Activated B cell treated with CpG ODN at 0.5 μM for 24 hours (primary cell): ENCODE measurements at regions of chrX and their contacts with region 1.

Region 1: DNA sequence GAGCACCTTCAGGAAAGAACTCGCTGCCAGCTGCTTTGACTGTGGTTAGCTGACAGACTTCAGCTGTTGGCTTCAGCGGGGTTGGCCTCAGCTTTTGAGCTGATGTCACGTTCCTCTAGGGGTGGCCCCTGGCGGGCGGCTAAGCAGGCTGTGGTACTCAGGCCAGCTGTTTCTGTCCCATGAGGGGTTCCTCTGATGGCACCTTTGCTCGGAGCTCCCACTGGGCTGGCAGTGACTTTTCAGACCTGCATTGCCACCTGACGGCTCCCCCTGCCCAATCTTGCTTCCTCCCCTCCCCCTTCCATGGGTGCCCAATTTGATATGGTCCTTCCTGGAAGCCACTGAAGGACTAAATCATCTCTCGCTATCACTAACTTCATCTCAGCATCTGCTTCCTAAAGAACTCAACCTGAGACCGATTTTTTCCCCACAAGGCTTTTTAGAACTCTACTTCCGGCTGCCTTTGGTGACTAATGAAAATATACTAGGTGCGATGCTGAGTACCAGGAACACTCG is 519.3 kb downstream of the BCOR start:
- DNase-seq: peak; percentile 32
- ATAC-seq: peak; percentile 97
- H3K4me3 Mint-ChIP-seq: no peak overlapping the region
- H3K27ac Mint-ChIP-seq: no peak overlapping the region
- H3K4me1 Mint-ChIP-seq: peaks cover 13% of the 10 kb centered on the region
- H3K27me3 Mint-ChIP-seq: peaks cover 12% of the 10 kb centered on the region
- CTCF ChIP-seq: no peak

Region 2: GRCh38 chrX:39196192-39197102 is 382.0 kb before region 1 on chrX:
- CTCF ChIA-PET with region 1: no interaction called
- POLR2A ChIA-PET with region 1: no interaction called
- intact Hi-C with region 1: loop called (anchors 5 kb)
- DNase-seq: peak; percentile 16
- ATAC-seq: peak; percentile 95
- H3K4me3 Mint-ChIP-seq: peak overlapping the region; percentile 65
- H3K27ac Mint-ChIP-seq: peak overlapping the region; percentile 56
- H3K4me1 Mint-ChIP-seq: peaks cover 19% of the 10 kb centered on the region
- H3K27me3 Mint-ChIP-seq: peaks cover 7% of the 10 kb centered on the region
- CTCF ChIP-seq: no peak

Region 3: DNA sequence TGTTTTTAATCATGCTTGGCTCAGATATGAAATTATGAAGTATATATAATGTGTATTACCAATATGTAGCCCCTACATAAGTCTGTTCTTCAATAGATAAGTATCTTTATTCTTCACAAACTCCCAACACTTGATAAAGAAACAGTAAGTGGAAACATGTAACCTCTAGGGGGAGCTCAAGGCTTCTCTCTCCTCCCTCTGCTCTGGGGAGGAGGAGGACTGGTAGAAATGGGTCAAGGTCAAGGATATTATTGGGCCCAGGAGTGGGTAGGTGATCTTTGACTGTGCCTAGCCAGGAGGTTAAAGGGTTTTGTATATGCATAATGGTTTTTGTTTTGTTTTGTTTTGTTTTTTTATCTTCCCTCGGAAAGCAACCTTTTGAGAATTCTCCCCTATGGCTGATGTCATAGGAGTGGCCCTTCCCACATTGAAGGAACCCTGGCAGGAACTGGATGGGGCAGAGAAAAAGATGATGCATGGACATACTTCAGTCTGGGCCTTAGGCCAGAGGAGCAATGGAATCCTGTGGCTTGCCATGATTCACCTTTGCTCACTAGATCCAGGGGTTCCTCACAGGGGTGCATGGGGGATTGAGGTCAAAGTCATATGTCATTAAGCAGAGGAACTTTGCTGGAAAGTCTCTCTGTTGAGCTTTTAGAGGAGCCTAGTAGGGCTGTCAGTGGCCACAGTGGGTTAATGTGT is 316.8 kb before region 1 on chrX:
- CTCF ChIA-PET with region 1: no interaction called
- POLR2A ChIA-PET with region 1: no interaction called
- intact Hi-C with region 1: loop called (anchors 5 kb)
- DNase-seq: no peak
- ATAC-seq: no peak
- H3K4me3 Mint-ChIP-seq: no peak overlapping the region
- H3K27ac Mint-ChIP-seq: no peak overlapping the region
- H3K4me1 Mint-ChIP-seq: peaks cover 4% of the 10 kb centered on the region
- H3K27me3 Mint-ChIP-seq: no peaks in the 10 kb centered on the region
- CTCF ChIP-seq: no peak

Region 4: GRCh38 chrX:39491548-39492297 is 86.7 kb before region 1 on chrX:
- CTCF ChIA-PET with region 1: no interaction called
- POLR2A ChIA-PET with region 1: no interaction called
- intact Hi-C with region 1: loop called (anchors 1 kb)
- DNase-seq: peak; percentile 36
- ATAC-seq: peak; percentile 91
- H3K4me3 Mint-ChIP-seq: peak overlapping the region; percentile 70
- H3K27ac Mint-ChIP-seq: peak overlapping the region; percentile 84
- H3K4me1 Mint-ChIP-seq: peaks cover 52% of the 10 kb centered on the region
- H3K27me3 Mint-ChIP-seq: no peaks in the 10 kb centered on the region
- CTCF ChIP-seq: no peak

Region 5: DNA sequence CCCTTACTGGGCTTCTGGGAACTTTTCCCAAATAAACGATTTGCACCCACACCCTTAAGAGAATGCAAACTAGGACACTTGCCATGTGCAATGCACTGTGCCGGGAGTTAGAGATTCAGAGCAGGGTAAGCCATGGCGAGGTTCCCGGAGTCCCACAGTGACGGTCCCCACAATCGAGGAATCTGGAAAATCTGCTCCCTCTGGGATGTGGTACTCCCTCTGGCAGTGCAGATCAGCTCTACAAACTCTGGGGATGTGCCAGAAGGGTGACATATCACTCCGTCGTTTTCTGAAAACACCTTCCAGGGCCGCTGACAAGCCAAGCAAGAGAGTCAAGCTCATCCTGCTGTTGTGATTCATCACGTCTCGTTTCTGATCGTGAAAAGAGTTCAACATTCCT is 18.1 kb before region 1 on chrX:
- CTCF ChIA-PET with region 1: no interaction called
- POLR2A ChIA-PET with region 1: no interaction called
- intact Hi-C with region 1: loop called (anchors 2 kb)
- DNase-seq: no peak
- ATAC-seq: no peak
- H3K4me3 Mint-ChIP-seq: no peak overlapping the region
- H3K27ac Mint-ChIP-seq: no peak overlapping the region
- H3K4me1 Mint-ChIP-seq: peaks cover 22% of the 10 kb centered on the region
- H3K27me3 Mint-ChIP-seq: no peaks in the 10 kb centered on the region
- CTCF ChIP-seq: no peak

Region 6: GRCh38 chrX:39613482-39613921 is 35.1 kb after region 1 on chrX:
- CTCF ChIA-PET with region 1: no interaction called
- POLR2A ChIA-PET with region 1: interaction called, 7 read pairs
- intact Hi-C with region 1: loop called (anchors 1 kb)
- DNase-seq: peak; percentile 14
- ATAC-seq: peak; percentile 23
- H3K4me3 Mint-ChIP-seq: peak overlapping the region; percentile 67
- H3K27ac Mint-ChIP-seq: no peak overlapping the region
- H3K4me1 Mint-ChIP-seq: peaks cover 27% of the 10 kb centered on the region
- H3K27me3 Mint-ChIP-seq: peaks cover 22% of the 10 kb centered on the region
- CTCF ChIP-seq: no peak